Activated naive CD4-positive, alpha-beta T cell treated with anti-CD3 and anti-CD28 coated beads, Interleukin-2, amount 10 ng/mL, durations not matched to agents 7 days and 5 days (primary cell): ENCODE measurements at regions of chr4 and their contacts with region 1.

Region 1: DNA sequence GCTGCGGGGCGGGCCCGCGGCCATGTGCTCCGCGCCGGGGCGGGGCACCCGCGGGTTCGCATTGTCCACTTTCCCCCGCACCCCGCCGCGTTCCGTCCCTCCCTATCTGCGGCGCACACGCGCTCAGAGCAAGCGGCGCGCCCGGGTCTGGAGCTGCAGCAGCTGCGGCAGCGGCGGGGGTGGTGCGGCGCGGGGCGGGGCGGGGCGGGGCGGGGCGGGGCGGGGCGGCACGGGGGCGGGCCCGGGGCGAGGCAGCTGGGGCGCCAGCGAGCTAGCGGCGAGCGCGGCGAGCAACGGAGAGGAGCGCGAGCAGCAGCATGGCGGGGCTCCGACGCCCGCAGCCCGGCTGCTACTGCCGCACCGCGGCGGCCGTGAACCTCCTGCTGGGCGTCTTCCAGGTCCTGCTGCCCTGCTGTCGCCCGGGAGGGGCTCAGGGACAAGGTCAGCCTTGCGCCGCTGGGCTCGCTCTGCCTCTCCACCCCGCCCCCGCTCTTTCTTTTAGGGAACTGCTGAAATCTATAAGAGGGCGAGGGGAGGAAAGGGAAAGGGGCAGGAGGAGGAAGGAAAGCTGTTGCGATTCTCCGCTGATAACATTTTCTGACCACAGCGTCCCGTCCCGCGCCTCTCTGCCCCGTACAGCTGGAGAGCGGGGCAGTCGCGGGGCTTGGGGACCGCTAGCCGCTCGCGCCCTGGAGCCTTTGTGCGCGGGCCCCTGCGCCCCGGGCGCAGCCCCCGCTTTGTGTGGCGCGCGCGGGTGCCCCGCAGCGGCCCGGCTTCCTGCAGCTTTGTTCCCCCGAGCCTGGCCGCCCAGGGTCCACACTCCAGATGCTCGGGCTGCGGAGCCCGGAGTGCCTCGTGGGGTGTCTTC is at the start of gene TMEM131L:
- DNase-seq: peak; percentile 75
- H3K4me3 Mint-ChIP-seq: peak within 1 kb of the TSS; percentile 96
- H3K27ac Mint-ChIP-seq: peak within 1 kb of the TSS; percentile 95
- H3K4me1 Mint-ChIP-seq: peaks cover 47% of the 10 kb centered on the region
- H3K27me3 Mint-ChIP-seq: peaks cover 4% of the 10 kb centered on the region

Region 2: GRCh38 chr4:153488006-153488891 is 21.9 kb after region 1 on chr4:
- CTCF ChIA-PET with region 1: interaction called, 28 read pairs
- DNase-seq: peak; percentile 76
- H3K4me3 Mint-ChIP-seq: peak overlapping the region; percentile 59
- H3K27ac Mint-ChIP-seq: peak overlapping the region; percentile 89
- H3K4me1 Mint-ChIP-seq: peaks cover 78% of the 10 kb centered on the region
- H3K27me3 Mint-ChIP-seq: no peaks in the 10 kb centered on the region